Dorsolateral prefrontal cortex (tissue), 120 donors: ENCODE measurements at regions of chr3 and their contacts with region 1.

Region 1: GRCh38 chr3:158790901-158791589 is 10.8 kb upstream of the MFSD1 start:
- DNase-seq: peak in 1 of 10 donors; percentile 35
- H3K4me3 ChIP-seq: peak overlapping the region in 52 of 59 donors; percentile 5 to 57 (median 38)
- H3K27ac ChIP-seq: no peak overlapping the region
- H3K27me3 ChIP-seq: no peaks in the 10 kb centered on the region
- CTCF ChIP-seq: peak; percentile 67 to 98 (median 87)

Region 2: GRCh38 chr3:158659454-158660237 is 131.4 kb before region 1 on chr3:
- intact Hi-C with region 1: loop called in 1 of 2 experiments (anchors 5 kb)
- DNase-seq: peak in 8 of 10 donors; percentile 21 to 75 (median 56)
- H3K4me3 ChIP-seq: no peak overlapping the region
- H3K27ac ChIP-seq: peak overlapping the region in 10 of 59 donors; percentile 7 to 72 (median 30)
- H3K27me3 ChIP-seq: no peaks in the 10 kb centered on the region
- CTCF ChIP-seq: peak; percentile 37 to 81 (median 69)

Region 3: GRCh38 chr3:158727206-158728060 is 63.6 kb before region 1 on chr3:
- intact Hi-C with region 1: loop called (anchors 2 to 5 kb)
- DNase-seq: peak in 2 of 10 donors; percentile 37 to 56
- H3K4me3 ChIP-seq: peak overlapping the region in 29 of 59 donors; percentile 2 to 53 (median 30)
- H3K27ac ChIP-seq: peak overlapping the region in 6 of 59 donors; percentile 16 to 55 (median 21)
- H3K27me3 ChIP-seq: no peaks in the 10 kb centered on the region
- CTCF ChIP-seq: peak; percentile 54 to 97 (median 88)

Region 4: GRCh38 chr3:159604151-159604581 is 813.1 kb after region 1 on chr3:
- intact Hi-C with region 1: no loop called
- DNase-seq: no peak
- H3K4me3 ChIP-seq: no peak overlapping the region
- H3K27ac ChIP-seq: no peak overlapping the region
- H3K27me3 ChIP-seq: no peaks in the 10 kb centered on the region
- CTCF ChIP-seq: no peak